GM12878 (cell line): ENCODE measurements at regions of chr20 and their contacts with region 1.

Region 1: GRCh38 chr20:43914311-43915210 is at the start of gene TOX2:
- DNase-seq: no peak
- ATAC-seq: peak; percentile 43
- H3K4me3 ChIP-seq: peak within 1 kb of the TSS; percentile 68; the same call in 1 of the 2 replicates
- H3K27ac ChIP-seq: peak within 1 kb of the TSS; percentile 28; the same call in 1 of the 2 replicates
- H3K4me1 ChIP-seq: peaks cover 18% of the 10 kb centered on the region
- H3K27me3 ChIP-seq: peaks cover 0 to 4% of the 10 kb centered on the region in 2 experiments; a peak in 2 of 4 replicates
- CTCF ChIP-seq: no peak
- EP300 ChIP-seq: no peak
- POLR2A ChIP-seq: no peak; the same call in 1 of the 2 replicates
- RAD21 ChIP-seq: no peak
- polyA plus RNA-seq, gene TOX2: 2.6 to 6.2 TPM

Region 2: DNA sequence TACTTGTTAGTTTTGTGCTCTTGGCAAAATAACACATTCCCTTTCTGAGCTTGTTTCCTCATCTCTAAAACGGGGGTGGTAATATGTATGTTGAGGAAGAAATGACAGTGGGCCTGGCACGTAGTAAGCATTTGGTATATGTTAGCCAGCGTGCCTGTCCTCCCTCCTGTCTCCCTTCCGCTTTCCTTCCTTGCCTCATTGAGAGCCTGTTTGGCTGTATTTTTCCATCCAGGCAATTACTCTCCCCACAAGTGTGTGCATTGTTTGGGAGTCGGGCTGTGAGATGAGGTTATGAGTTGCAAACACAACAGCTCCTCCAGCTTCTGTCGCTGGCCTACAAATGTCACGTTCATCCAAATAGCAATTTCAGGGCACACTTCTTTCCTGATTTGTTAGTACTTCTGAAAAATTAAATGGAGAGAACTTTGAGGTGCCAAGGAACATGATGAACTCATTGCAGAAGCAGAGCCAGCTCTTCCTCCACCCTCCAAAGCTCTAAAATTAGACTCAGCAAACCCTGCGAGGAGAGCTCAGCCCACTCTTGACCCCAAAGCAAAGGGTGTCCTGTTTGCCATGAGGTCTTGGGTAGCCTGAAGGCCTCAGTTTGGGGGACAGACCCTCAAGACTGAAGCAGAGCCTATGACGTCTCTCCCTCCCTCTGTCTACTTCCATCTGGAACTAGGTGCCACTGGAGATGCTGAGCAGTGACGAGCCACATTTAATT is 50.6 kb before region 1 on chr20:
- CTCF ChIA-PET with region 1: no interaction called
- POLR2A ChIA-PET with region 1: no interaction called
- RAD21 ChIA-PET with region 1: no interaction called
- SMC1A ChIA-PET with region 1: no interaction called
- in situ Hi-C with region 1: no loop called
- intact Hi-C with region 1: no loop called
- DNase-seq: no peak
- ATAC-seq: no peak
- H3K4me3 ChIP-seq: no peak overlapping the region
- H3K27ac ChIP-seq: no peak overlapping the region
- H3K4me1 ChIP-seq: no peaks in the 10 kb centered on the region
- H3K27me3 ChIP-seq: no peaks in the 10 kb centered on the region
- CTCF ChIP-seq: no peak
- EP300 ChIP-seq: no peak
- POLR2A ChIP-seq: no peak
- RAD21 ChIP-seq: no peak

Region 3: DNA sequence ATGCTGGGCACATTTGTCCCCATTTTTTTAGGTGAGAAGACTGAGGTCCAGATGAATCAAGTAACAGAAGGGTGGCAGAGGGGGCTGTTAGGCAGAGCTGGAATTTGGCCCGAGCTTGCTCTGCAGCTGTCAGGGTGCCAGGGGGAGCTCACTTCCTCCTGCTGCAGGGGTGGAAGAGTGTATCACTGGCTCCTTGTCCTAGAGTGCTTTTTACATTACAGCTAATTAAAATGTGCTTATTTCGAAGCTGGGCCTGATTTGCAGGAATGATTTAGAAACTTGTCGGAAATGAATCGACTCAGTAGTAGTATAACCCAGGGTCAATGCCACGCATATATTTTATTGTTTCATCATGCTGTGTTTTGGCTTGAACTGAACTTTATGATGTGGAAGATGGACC is 11.2 kb after region 1 on chr20:
- CTCF ChIA-PET with region 1: interaction called, 9 read pairs
- POLR2A ChIA-PET with region 1: interaction called, 6 read pairs
- RAD21 ChIA-PET with region 1: interaction called, 5 read pairs
- SMC1A ChIA-PET with region 1: interaction called, 11 read pairs
- in situ Hi-C with region 1: no loop called
- intact Hi-C with region 1: no loop called
- DNase-seq: no peak
- ATAC-seq: peak; percentile 54
- H3K4me3 ChIP-seq: no peak overlapping the region
- H3K27ac ChIP-seq: no peak overlapping the region
- H3K4me1 ChIP-seq: peaks cover 36% of the 10 kb centered on the region
- H3K27me3 ChIP-seq: no peaks in the 10 kb centered on the region
- CTCF ChIP-seq: peak in 2 of 3 experiments; percentile 8 to 36; a peak in 2 of 6 replicates
- EP300 ChIP-seq: no peak
- POLR2A ChIP-seq: no peak
- RAD21 ChIP-seq: peak; percentile 24; the same call in 1 of the 2 replicates

Region 4: GRCh38 chr20:44642203-44643153 is 727.9 kb after region 1 on chr20:
- CTCF ChIA-PET with region 1: no interaction called
- POLR2A ChIA-PET with region 1: no interaction called
- RAD21 ChIA-PET with region 1: no interaction called
- SMC1A ChIA-PET with region 1: no interaction called
- in situ Hi-C with region 1: no loop called
- intact Hi-C with region 1: no loop called
- DNase-seq: peak; percentile 77
- ATAC-seq: peak; percentile 65
- H3K4me3 ChIP-seq: peak overlapping the region; percentile 16; the same call in 1 of the 2 replicates
- H3K27ac ChIP-seq: peak overlapping the region; percentile 99
- H3K4me1 ChIP-seq: peaks cover 68% of the 10 kb centered on the region
- H3K27me3 ChIP-seq: no peaks in the 10 kb centered on the region
- CTCF ChIP-seq: peak; percentile 18 to 42 (median 22); a peak in 5 of 6 replicates
- EP300 ChIP-seq: peak in 1 of 2 experiments; percentile 17; a peak in 1 of 4 replicates
- POLR2A ChIP-seq: peak; percentile 51; the same call in 1 of the 2 replicates
- RAD21 ChIP-seq: 0 out of 2 replicates have a peak, but pooled peaks have one; percentile 17